Colonic mucosa (tissue), 4 donors: ENCODE measurements at regions of chr17 and their contacts with region 1.

Region 1: GRCh38 chr17:5975661-5976060 is 94.5 kb upstream of the WSCD1 start:
- DNase-seq: no peak
- H3K4me3 ChIP-seq: no peak overlapping the region
- H3K27ac ChIP-seq: no peak overlapping the region
- H3K4me1 ChIP-seq: no peaks in the 10 kb centered on the region
- H3K27me3 ChIP-seq: no peaks in the 10 kb centered on the region
- CTCF ChIP-seq: no peak

Region 2: DNA sequence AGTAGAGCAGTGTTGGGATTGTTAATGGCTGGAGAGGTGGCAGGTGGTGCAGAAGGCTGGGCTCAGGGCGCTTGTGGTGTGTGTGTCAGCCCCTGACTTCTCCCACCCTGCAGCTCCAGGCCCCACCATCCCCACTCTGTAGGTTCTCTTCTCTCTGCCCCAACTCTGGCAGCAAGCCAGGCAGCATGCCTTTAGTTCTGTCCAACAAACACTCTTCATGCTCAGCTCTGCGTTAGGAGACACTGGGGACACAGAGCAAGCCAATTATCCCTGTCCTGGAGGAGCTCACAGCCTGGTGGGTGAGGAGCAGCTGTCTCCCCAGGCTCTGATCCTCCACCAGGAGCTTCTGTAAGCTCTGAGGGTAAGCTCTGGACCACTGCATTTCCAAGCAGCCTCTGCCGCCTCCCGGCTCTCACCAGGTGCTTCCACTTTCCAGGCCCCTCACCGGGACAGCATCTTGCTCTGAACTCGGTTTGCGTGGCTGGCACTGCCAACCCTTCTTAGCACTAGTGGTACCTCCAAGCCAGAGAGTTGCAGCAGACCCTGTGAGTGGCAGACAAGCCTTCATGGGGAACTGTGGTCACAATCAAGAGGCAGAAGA is 60.2 kb after region 1 on chr17:
- intact Hi-C with region 1: loop called (anchors 10 kb)
- DNase-seq: no peak
- H3K4me3 ChIP-seq: no peak overlapping the region
- H3K27ac ChIP-seq: no peak overlapping the region
- H3K4me1 ChIP-seq: no peaks in the 10 kb centered on the region
- H3K27me3 ChIP-seq: no peaks in the 10 kb centered on the region
- CTCF ChIP-seq: no peak

Region 3: GRCh38 chr17:6303664-6304063 is 328.0 kb after region 1 on chr17:
- intact Hi-C with region 1: no loop called
- DNase-seq: no peak
- H3K4me3 ChIP-seq: no peak overlapping the region
- H3K27ac ChIP-seq: no peak overlapping the region
- H3K4me1 ChIP-seq: no peaks in the 10 kb centered on the region
- H3K27me3 ChIP-seq: no peaks in the 10 kb centered on the region
- CTCF ChIP-seq: no peak